PC-3 (cell line): ENCODE measurements at regions of chr6 and their contacts with region 1.

Region 1: DNA sequence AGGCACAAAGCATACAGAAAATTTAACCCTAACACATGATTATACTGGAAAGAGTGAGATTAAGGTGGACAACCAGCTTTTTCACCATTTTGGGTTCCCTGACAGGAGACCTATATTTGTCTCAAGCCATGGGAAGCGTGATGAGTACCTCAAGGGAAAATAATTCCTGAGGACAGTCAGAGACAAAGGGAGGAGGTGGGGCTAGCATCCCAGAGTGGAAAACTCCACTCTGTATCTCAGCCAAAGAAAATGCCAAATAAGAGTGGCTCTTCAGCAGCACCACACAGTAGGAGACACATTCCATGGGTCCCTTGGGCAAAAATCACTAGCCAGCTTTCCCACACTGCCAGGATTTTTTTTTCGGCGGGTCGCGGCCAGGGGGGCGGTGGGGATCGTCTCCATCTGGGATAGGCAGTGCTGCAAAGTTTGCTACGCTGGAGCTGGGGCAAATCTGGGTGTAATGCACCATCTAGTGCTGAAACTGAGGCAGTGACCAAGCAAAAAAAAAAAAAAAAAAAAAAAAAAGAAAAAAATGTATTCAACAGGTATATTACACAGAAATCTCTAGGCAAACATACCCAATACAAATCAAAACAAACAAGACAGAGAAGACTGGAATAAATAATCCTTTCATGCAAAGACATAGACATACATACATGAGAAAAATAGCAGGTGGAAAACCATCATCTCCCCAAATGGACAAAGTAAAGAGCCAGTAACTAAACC is 77.3 kb upstream of the SLC35F1 start:
- DNase-seq: peak; percentile 47
- ATAC-seq: peak; percentile 74
- H3K4me3 ChIP-seq: peak overlapping the region; percentile 68
- H3K27ac ChIP-seq: no peak overlapping the region
- H3K4me1 ChIP-seq: no peaks in the 10 kb centered on the region
- H3K27me3 ChIP-seq: peaks cover 1% of the 10 kb centered on the region; the same call in 1 of the 2 replicates
- CTCF ChIP-seq: peak; percentile 62; the same call in 1 of the 2 replicates

Region 2: GRCh38 chr6:117149324-117149723 is 680.4 kb before region 1 on chr6:
- CTCF ChIA-PET with region 1: no interaction called
- POLR2A ChIA-PET with region 1: no interaction called
- intact Hi-C with region 1: no loop called
- DNase-seq: no peak
- ATAC-seq: no peak
- H3K4me3 ChIP-seq: no peak overlapping the region
- H3K27ac ChIP-seq: no peak overlapping the region
- H3K4me1 ChIP-seq: no peaks in the 10 kb centered on the region
- H3K27me3 ChIP-seq: no peaks in the 10 kb centered on the region
- CTCF ChIP-seq: no peak

Region 3: GRCh38 chr6:117346142-117346930 is 483.4 kb before region 1 on chr6:
- CTCF ChIA-PET with region 1: no interaction called
- POLR2A ChIA-PET with region 1: no interaction called
- intact Hi-C with region 1: loop called (anchors 2 kb)
- DNase-seq: peak; percentile 69
- ATAC-seq: no peak
- H3K4me3 ChIP-seq: peak overlapping the region; percentile 42; the same call in 1 of the 2 replicates
- H3K27ac ChIP-seq: no peak overlapping the region
- H3K4me1 ChIP-seq: 0 out of 2 replicates have a peak, but pooled peaks cover 7% of the 10 kb centered on the region
- H3K27me3 ChIP-seq: no peaks in the 10 kb centered on the region
- CTCF ChIP-seq: peak; percentile 64

Region 4: DNA sequence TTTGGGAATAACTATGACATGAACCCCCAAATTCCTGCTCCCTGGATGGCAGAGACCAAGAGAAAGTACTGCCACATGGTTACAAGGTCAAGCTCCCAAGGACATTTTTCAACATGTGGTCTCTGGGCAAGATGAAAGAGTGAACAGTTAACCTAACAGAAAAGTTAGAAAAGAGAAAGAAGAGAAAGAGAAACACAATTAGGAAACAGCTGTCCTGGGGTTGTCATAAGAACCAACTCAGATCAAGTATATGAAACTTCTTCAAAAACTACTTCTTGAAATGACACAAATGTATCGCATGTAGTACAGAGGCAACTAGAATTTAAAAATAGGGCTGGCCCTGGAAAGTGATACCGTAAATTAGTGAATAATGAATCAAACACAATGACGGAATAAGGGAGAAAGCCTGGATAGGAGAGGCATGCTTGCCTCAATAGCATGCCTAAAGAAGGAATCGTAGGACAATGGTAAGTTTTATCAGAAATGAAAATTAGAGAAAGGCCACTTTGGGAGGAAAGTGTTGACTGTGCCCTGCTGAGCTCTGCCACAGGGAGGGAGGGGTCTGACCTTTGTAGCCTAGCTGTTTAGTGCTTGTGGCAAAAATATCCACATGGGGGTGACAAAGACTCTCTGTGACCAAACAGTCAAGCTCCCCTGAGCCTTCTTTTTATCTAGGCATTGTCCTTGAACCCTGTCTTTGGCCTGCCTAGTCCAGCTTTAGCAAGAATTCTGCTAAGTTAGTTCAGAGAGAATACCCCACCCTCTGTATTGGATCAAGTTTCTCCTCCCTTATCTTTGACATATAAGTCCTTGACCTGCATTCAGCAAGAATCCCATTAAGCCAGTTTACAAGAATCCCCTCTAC is 351.5 kb before region 1 on chr6:
- CTCF ChIA-PET with region 1: no interaction called
- POLR2A ChIA-PET with region 1: no interaction called
- intact Hi-C with region 1: no loop called
- DNase-seq: no peak
- ATAC-seq: no peak
- H3K4me3 ChIP-seq: no peak overlapping the region
- H3K27ac ChIP-seq: no peak overlapping the region
- H3K4me1 ChIP-seq: peaks cover 6% of the 10 kb centered on the region; the same call in 1 of the 2 replicates
- H3K27me3 ChIP-seq: no peaks in the 10 kb centered on the region
- CTCF ChIP-seq: peak; percentile 29; the same call in 1 of the 2 replicates

Region 5: DNA sequence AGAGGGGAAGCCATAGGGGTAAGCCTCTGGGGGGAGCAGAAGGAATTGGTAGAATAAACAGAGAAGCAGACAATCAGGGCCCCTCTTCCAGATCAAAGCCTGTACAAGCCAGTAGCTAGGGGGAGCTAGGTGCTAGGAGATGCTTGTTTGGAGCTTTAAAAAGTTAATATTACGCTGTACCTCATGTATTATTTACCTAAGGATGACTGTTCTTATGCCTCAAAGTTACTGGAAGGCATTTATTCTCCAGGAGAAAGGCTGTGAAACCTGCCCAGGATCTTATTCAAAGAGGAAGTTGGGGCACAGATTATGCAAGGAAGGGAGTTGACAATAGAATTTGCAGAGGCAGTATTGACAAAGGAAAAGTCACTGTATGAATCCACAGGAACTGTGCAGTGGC is 34.5 kb before region 1 on chr6:
- CTCF ChIA-PET with region 1: interaction called, 7 read pairs
- POLR2A ChIA-PET with region 1: no interaction called
- intact Hi-C with region 1: loop called (anchors 1 kb)
- DNase-seq: peak; percentile 81
- ATAC-seq: peak; percentile 97
- H3K4me3 ChIP-seq: no peak overlapping the region
- H3K27ac ChIP-seq: no peak overlapping the region; the same call in 1 of the 2 replicates
- H3K4me1 ChIP-seq: peaks cover 7% of the 10 kb centered on the region
- H3K27me3 ChIP-seq: peaks cover 7% of the 10 kb centered on the region; the same call in 1 of the 2 replicates
- CTCF ChIP-seq: peak; percentile 69